Activated T-helper 1 cell treated with anti-CD3 and anti-CD28 coated beads, Interleukin-12 subunit alpha, Interleukin-12 subunit beta, Interleukin-2, Interleukin-4 antibody, amounts not matched to agents 30 ng/mL and 10 ng/mL and 1 ng/mL, durations not matched to agents 14 hours and 24 hours and 36 hours (primary cell): ENCODE measurements at regions of chr12 and their contacts with region 1.

Region 1: DNA sequence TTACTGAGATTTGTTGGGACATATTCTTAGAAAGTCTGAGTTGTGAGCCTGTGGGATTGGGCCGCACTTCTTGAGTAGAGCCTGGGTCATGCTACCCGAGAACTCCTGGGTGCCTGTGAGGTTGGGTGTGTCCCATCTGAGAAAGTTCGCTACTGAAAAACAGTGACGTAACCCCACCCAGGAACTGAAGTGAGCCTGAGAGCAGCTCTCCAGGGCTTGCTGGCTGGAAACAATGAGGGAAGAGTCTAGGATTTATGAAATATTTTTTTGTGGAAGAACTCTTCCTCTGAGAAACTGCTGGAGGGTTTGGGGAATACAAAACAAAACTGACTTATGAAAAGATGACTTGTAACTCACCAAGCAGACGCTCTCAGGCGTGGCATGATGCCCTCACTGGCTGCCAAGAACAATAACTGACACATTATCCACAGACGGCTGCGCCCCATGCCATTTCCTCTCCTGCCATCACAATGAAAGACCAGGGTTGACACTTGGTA is 69.2 kb downstream of the RASSF3 start:
- DNase-seq: peak; percentile 51
- H3K4me3 Mint-ChIP-seq: peak overlapping the region; percentile 53
- H3K27ac Mint-ChIP-seq: peak overlapping the region; percentile 84
- H3K4me1 Mint-ChIP-seq: peaks cover 82% of the 10 kb centered on the region
- H3K27me3 Mint-ChIP-seq: no peaks in the 10 kb centered on the region

Region 2: GRCh38 chr12:64451687-64452558 is 227.6 kb before region 1 on chr12 and contains the start of gene TBK1:
- intact Hi-C with region 1: loop called (anchors 5 kb)
- DNase-seq: peak; percentile 74
- H3K4me3 Mint-ChIP-seq: peak within 1 kb of the TSS; percentile 97
- H3K27ac Mint-ChIP-seq: peak within 1 kb of the TSS; percentile 94
- H3K4me1 Mint-ChIP-seq: peaks cover 47% of the 10 kb centered on the region
- H3K27me3 Mint-ChIP-seq: no peaks in the 10 kb centered on the region
- total RNA-seq, gene TBK1: 33.6 and 42.4 TPM in 2 replicates

Region 3: GRCh38 chr12:64660237-64661018 is 19.1 kb before region 1 on chr12:
- intact Hi-C with region 1: loop called (anchors 1 kb)
- DNase-seq: no peak
- H3K4me3 Mint-ChIP-seq: no peak overlapping the region
- H3K27ac Mint-ChIP-seq: no peak overlapping the region
- H3K4me1 Mint-ChIP-seq: peaks cover 61% of the 10 kb centered on the region
- H3K27me3 Mint-ChIP-seq: no peaks in the 10 kb centered on the region

Region 4: GRCh38 chr12:64669270-64669842 is 10.2 kb before region 1 on chr12:
- intact Hi-C with region 1: loop called (anchors 1 kb)
- DNase-seq: peak; percentile 53
- H3K4me3 Mint-ChIP-seq: peak overlapping the region; percentile 85
- H3K27ac Mint-ChIP-seq: peak overlapping the region; percentile 94
- H3K4me1 Mint-ChIP-seq: peaks cover 87% of the 10 kb centered on the region
- H3K27me3 Mint-ChIP-seq: no peaks in the 10 kb centered on the region

Region 5: GRCh38 chr12:64696080-64696741 is 16.7 kb after region 1 on chr12:
- intact Hi-C with region 1: loop called (anchors 2 kb)
- DNase-seq: no peak
- H3K4me3 Mint-ChIP-seq: no peak overlapping the region
- H3K27ac Mint-ChIP-seq: no peak overlapping the region
- H3K4me1 Mint-ChIP-seq: peaks cover 73% of the 10 kb centered on the region
- H3K27me3 Mint-ChIP-seq: no peaks in the 10 kb centered on the region

Region 6: DNA sequence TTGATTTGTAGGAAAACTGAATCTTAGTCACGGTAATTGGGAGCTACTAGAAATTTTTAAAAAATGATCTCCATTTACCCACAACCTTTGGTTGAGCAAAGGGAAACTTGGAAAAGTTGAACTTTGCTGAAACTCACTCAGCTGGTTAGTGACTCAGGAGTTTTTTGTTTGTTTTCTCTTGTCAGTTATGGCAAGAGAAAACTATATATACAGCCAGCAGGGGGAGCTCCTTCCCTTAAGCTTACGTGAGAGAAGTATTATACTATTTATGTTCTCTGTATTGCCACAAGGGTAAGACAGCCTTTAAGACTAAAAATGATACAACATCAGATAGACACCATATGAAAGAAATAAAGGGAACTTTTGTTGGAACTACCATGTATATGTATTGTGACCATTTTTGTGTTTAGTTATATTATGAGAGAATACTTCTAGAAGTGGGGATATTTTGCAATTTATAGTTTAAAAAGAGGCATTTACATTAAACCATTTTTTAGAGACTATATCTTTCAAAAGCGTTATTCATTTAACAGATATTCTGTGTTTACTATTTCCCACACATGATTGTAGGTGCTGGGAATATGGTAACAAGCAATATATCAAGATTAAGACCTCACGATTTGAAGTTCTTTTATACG is 116.8 kb after region 1 on chr12:
- intact Hi-C with region 1: no loop called
- DNase-seq: peak; percentile 44
- H3K4me3 Mint-ChIP-seq: no peak overlapping the region
- H3K27ac Mint-ChIP-seq: no peak overlapping the region
- H3K4me1 Mint-ChIP-seq: no peaks in the 10 kb centered on the region
- H3K27me3 Mint-ChIP-seq: peaks cover 27% of the 10 kb centered on the region